ENCODE measurements at regions of chr2 and their contacts with region 1.

Region 1: GRCh38 chr2:11556101-11556821 is 22.4 kb downstream of the GREB1 start:
- DNase-seq: no peak
- ATAC-seq: peak in 4 of 8 donors; percentile 34 to 64 (median 38)
- H3K4me3 ChIP-seq: no peak overlapping the region
- H3K27ac ChIP-seq: no peak overlapping the region
- H3K4me1 ChIP-seq: peaks cover 0 to 23% (median 4%) of the 10 kb centered on the region in 9 donors
- H3K27me3 ChIP-seq: peaks cover 0 to 36% (median 0%) of the 10 kb centered on the region in 7 donors
- CTCF ChIP-seq: no peak

Region 2: GRCh38 chr2:11492720-11493119 is 63.5 kb before region 1 on chr2:
- intact Hi-C with region 1: loop called in 3 of 10 experiments (anchors 5 kb)
- DNase-seq: no peak
- ATAC-seq: no peak
- H3K4me3 ChIP-seq: no peak overlapping the region
- H3K27ac ChIP-seq: no peak overlapping the region
- H3K4me1 ChIP-seq: peaks cover 0 to 17% (median 6%) of the 10 kb centered on the region in 9 donors
- H3K27me3 ChIP-seq: peaks cover 0 to 11% (median 0%) of the 10 kb centered on the region in 7 donors
- CTCF ChIP-seq: no peak

Region 3: GRCh38 chr2:11498543-11499080 is 57.6 kb before region 1 on chr2:
- intact Hi-C with region 1: loop called in 3 of 10 experiments (anchors 5 kb)
- DNase-seq: peak; percentile 86 to 88
- ATAC-seq: peak; percentile 89 to 98 (median 96)
- H3K4me3 ChIP-seq: no peak overlapping the region
- H3K27ac ChIP-seq: peak overlapping the region in 9 of 10 donors; percentile 39 to 89 (median 82)
- H3K4me1 ChIP-seq: peaks cover 0 to 39% (median 16%) of the 10 kb centered on the region in 9 donors
- H3K27me3 ChIP-seq: peaks cover 0 to 7% (median 0%) of the 10 kb centered on the region in 7 donors
- CTCF ChIP-seq: no peak

Region 4: DNA sequence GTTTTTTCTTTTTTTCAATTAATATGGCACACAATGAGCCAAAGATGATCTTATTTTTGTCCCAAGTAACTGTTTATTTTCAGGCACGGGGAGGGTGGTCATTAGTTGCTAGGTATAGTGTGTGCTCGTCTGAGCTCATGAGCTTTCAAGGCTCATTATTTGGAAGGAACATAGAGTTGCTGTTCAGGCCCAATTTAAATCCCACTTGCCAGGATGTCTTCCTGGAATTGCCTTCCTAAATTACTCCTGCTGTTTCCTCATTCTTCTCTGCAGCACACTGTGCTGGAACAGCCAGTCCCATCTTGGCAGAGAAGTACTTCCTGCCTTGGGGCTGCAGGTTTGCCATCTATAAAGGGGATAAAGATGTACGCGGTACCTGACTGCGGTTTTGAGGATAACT is 14.9 kb after region 1 on chr2:
- intact Hi-C with region 1: no loop called
- DNase-seq: no peak
- ATAC-seq: peak in 4 of 8 donors; percentile 24 to 85 (median 43)
- H3K4me3 ChIP-seq: no peak overlapping the region
- H3K27ac ChIP-seq: no peak overlapping the region
- H3K4me1 ChIP-seq: peaks cover 0 to 4% (median 0%) of the 10 kb centered on the region in 9 donors
- H3K27me3 ChIP-seq: no peaks in the 10 kb centered on the region
- CTCF ChIP-seq: no peak

Region 5: DNA sequence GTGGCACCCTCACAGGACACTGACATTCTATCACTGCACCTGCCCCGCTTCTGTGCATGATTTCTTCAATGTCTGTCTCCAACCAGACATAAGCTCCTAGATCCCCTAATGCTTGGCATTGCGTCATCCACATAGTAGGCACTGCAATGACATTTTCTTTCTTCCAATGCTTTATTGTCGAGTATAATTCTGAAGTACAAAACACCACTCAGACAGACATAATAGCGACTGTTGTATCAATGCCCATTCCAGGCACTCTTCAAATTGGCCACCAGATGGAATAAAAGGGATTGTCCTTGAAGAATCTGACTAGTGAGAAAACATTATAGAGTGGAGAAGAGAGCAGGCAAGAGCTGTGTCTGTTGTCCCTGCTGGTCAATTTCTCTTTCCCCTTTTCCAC is 279.1 kb after region 1 on chr2:
- intact Hi-C with region 1: no loop called
- DNase-seq: no peak
- ATAC-seq: no peak
- H3K4me3 ChIP-seq: no peak overlapping the region
- H3K27ac ChIP-seq: no peak overlapping the region
- H3K4me1 ChIP-seq: peaks cover 0 to 21% (median 9%) of the 10 kb centered on the region in 9 donors
- H3K27me3 ChIP-seq: peaks cover 0 to 18% (median 0%) of the 10 kb centered on the region in 7 donors
- CTCF ChIP-seq: peak in 1 of 9 donors; percentile 15